ENCODE measurements at regions of chr15 and their contacts with region 1.

Region 1: DNA sequence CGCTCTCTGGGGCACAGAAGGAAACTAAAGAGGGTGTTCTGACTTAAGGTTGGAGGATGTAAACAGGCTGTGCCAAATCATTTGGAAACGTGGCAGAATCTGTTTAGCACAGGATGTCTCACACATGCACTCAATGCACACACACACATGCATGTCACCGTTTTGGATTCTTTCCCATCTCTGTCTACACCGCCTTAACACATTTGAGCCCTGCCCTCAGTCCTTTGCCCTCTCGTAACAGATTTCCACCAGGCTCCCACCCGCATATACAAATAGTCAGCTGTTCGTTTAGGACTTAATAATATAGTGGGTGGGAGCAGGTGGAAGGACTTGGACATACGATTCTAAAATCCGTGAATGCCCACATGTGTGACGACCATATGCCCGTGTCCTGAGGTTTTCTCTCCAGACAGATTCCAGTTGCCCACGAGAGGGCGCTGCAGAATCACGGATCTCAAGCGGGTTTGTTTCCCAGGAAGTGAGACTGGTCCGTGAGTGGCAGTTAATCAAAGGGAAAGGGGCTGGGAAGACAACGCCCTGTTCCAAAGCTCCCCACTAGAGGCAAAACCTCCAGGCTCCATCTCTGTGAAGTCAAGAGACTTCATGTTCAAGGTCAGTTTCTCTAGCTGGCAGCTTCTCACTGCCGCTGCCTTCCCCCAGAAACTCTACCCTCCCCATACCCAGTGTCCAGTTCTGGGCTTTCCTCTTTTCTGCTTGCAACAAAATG is 44.5 kb downstream of the NOX5 start:
- DNase-seq: peak; percentile 92 to 99
- ATAC-seq: peak; percentile 79 to 92
- H3K4me3 ChIP-seq: no peak overlapping the region
- H3K27ac ChIP-seq: peak overlapping the region; percentile 27 to 63; a peak in 5 of 6 replicates
- H3K4me1 ChIP-seq: peaks cover 26% of the 10 kb centered on the region
- CTCF ChIP-seq: peak; percentile 99
- EP300 ChIP-seq: no peak
- POLR2A ChIP-seq: no peak
- RAD21 ChIP-seq: peak; percentile 99

Region 2: DNA sequence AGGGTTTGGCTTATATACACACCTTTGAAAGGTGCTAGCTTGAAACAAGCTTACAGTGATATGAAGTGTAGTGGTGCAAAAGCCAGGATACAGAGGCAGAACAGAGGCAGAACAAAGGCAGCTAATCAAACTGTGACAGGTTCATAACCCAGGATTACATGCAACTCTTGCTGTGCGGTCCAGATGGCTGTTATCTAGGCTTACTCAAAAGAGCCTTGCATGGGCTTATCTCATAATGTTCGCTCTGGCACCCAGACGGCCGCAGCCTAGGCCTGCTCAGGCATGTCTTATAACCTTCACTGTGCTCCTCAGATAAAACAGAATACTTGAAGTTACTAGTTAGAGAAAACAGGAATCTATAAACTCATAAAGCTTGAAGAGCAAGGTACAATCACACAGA is 67.3 kb before region 1 on chr15:
- CTCF ChIA-PET with region 1: no interaction called
- POLR2A ChIA-PET with region 1: no interaction called
- DNase-seq: no peak
- ATAC-seq: no peak
- H3K4me3 ChIP-seq: no peak overlapping the region
- H3K27ac ChIP-seq: no peak overlapping the region
- H3K4me1 ChIP-seq: no peaks in the 10 kb centered on the region
- CTCF ChIP-seq: no peak
- EP300 ChIP-seq: no peak
- POLR2A ChIP-seq: no peak
- RAD21 ChIP-seq: no peak

Region 3: DNA sequence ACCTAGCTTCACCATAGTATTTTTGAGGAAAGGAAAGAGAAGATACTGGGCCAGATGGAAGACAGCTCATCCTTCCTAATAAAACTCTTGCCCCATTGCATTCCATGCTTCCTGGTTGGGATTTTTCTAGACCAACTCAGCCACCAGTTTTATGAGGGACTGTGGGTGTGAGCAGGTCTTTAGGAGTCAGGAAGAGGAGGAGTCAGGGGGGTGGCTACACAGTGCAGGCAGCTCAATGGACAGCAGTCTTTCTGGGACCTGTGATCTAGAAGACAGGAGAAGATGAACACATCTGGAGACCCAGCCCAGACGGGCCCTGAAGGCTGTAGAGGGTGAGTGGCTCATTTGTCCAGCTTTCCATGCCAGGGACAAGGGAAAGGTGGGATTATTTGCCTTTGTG is 44.5 kb before region 1 on chr15 and contains the start of gene NOX5:
- CTCF ChIA-PET with region 1: no interaction called
- POLR2A ChIA-PET with region 1: no interaction called
- DNase-seq: peak in 1 of 2 experiments; percentile 46
- ATAC-seq: peak; percentile 38 to 77; a peak in 3 of 6 replicates
- H3K4me3 ChIP-seq: no peak within 1 kb of the TSS
- H3K27ac ChIP-seq: no peak within 1 kb of the TSS
- H3K4me1 ChIP-seq: peaks cover 7% of the 10 kb centered on the region; the same call in 2 of the 3 replicates
- CTCF ChIP-seq: no peak
- EP300 ChIP-seq: no peak
- POLR2A ChIP-seq: no peak
- RAD21 ChIP-seq: no peak
- polyA plus RNA-seq, gene NOX5: 0.13 and 0.22 TPM in 2 replicates

Region 4: DNA sequence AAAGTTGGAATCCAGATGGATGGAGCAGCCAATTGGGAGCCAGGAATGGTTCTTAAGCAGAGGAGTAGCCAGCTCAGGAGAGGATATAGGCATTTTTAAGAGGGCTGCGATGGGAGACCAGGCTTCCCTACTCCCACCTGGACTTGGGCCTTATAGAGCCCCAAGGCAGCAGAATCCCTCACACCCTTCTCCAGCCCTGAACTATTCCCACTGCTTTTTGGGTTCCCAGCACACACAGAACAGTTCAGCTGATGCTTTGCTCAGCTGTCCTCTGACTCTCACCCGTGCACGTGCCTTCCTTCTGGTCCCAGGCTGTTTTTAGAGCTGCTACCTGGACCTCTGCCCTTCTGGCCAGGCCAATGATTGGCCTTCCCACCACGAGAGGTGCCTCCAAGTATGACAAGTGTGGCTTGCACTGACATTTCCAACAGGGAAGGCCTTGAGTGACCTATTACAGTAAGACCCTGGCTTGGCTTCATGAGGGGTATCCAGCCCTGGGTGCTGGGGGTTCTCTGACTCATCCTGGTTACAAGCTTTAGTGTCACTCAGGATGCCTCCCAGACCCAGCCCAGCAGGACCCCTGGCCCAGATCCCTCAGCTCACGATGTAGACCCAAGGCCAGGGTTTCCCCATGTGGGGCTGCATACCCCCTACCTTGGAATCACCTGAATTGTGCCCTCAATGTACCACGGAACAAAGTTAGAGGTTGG is 19.3 kb before region 1 on chr15:
- CTCF ChIA-PET with region 1: interaction called, 20 read pairs
- POLR2A ChIA-PET with region 1: no interaction called
- DNase-seq: no peak
- ATAC-seq: no peak
- H3K4me3 ChIP-seq: no peak overlapping the region
- H3K27ac ChIP-seq: no peak overlapping the region
- H3K4me1 ChIP-seq: peaks cover 11% of the 10 kb centered on the region
- CTCF ChIP-seq: no peak
- EP300 ChIP-seq: no peak
- POLR2A ChIP-seq: no peak
- RAD21 ChIP-seq: no peak

Region 5: DNA sequence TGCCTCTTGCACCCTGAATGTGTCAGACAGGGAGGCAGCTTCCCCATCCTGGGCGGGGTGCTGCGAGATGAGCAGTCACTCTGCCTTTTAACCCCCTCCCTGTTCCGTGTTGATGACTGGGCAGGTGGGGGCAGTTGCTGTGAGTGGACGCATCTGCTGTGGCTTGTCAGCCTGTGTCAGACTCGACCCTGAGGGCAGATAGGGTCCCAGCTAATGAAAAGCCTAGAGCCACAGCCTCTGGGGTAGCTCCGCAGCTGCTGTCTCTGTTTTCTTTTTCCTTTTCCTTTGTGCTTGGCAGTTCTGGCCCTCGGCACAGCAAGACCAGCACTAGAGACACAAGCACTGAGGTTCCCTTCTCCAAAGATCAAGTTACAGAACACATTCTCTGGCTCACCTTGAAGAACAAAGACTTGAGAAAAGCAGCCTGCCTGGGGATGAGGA is 58.5 kb after region 1 on chr15:
- CTCF ChIA-PET with region 1: interaction called, 14 read pairs
- POLR2A ChIA-PET with region 1: no interaction called
- DNase-seq: no peak
- ATAC-seq: no peak
- H3K4me3 ChIP-seq: no peak overlapping the region
- H3K27ac ChIP-seq: no peak overlapping the region
- H3K4me1 ChIP-seq: no peaks in the 10 kb centered on the region
- CTCF ChIP-seq: no peak
- EP300 ChIP-seq: no peak
- POLR2A ChIP-seq: no peak
- RAD21 ChIP-seq: no peak

Region 6: GRCh38 chr15:69225355-69226025 is 166.5 kb after region 1 on chr15:
- CTCF ChIA-PET with region 1: interaction called, 49 read pairs
- POLR2A ChIA-PET with region 1: no interaction called
- DNase-seq: peak; percentile 14 to 55
- ATAC-seq: peak; percentile 50 to 65; a peak in 4 of 6 replicates
- H3K4me3 ChIP-seq: no peak overlapping the region
- H3K27ac ChIP-seq: no peak overlapping the region
- H3K4me1 ChIP-seq: peaks cover 3% of the 10 kb centered on the region; the same call in 1 of the 3 replicates
- CTCF ChIP-seq: peak; percentile 61
- EP300 ChIP-seq: no peak
- POLR2A ChIP-seq: no peak
- RAD21 ChIP-seq: peak; percentile 77 to 79

Region 7: GRCh38 chr15:69298697-69299441 is 239.9 kb after region 1 on chr15 and contains the start of gene PAQR5:
- CTCF ChIA-PET with region 1: interaction called, 13 read pairs
- POLR2A ChIA-PET with region 1: no interaction called
- DNase-seq: peak; percentile 63 to 92
- ATAC-seq: peak; percentile 77 to 84
- H3K4me3 ChIP-seq: peak within 1 kb of the TSS; percentile 95
- H3K27ac ChIP-seq: peak within 1 kb of the TSS; percentile 94 to 96
- H3K4me1 ChIP-seq: peaks cover 39% of the 10 kb centered on the region
- CTCF ChIP-seq: no peak
- EP300 ChIP-seq: no peak
- POLR2A ChIP-seq: peak; percentile 64
- RAD21 ChIP-seq: no peak; a peak in 1 of 5 replicates
- polyA plus RNA-seq, gene PAQR5: 114 and 158 TPM in 2 replicates

Region 8: DNA sequence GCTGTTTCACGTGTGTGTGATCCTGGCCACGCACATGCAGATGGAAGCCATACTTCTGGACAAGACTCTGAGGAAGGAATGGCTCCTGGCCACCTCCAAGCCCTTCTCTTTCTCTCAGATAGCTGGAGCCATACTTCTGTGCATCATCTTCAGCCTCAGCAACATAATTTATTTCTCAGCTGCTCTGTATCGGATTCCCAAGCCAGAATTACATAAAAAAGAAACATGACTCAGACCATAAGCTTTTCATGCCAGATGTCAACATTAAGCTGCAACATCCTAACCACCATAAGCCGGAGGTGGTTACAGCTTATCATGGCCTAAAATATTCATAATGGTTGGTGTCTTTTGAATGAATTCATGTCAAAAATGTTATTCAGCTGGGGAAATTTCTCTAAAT is 344.6 kb after region 1 on chr15:
- CTCF ChIA-PET with region 1: interaction called, 198 read pairs
- POLR2A ChIA-PET with region 1: no interaction called
- DNase-seq: no peak
- ATAC-seq: no peak
- H3K4me3 ChIP-seq: no peak overlapping the region
- H3K27ac ChIP-seq: no peak overlapping the region
- H3K4me1 ChIP-seq: no peaks in the 10 kb centered on the region
- CTCF ChIP-seq: no peak
- EP300 ChIP-seq: no peak
- POLR2A ChIP-seq: no peak
- RAD21 ChIP-seq: no peak